Activated B cell treated with CpG ODN at 0.5 μM for 24 hours (primary cell): ENCODE measurements at regions of chr12 and their contacts with region 1.

Region 1: GRCh38 chr12:130044991-130045621 is 117.2 kb upstream of the FZD10 start:
- DNase-seq: no peak
- ATAC-seq: no peak
- H3K4me3 Mint-ChIP-seq: no peak overlapping the region
- H3K27ac Mint-ChIP-seq: no peak overlapping the region
- H3K4me1 Mint-ChIP-seq: no peaks in the 10 kb centered on the region
- H3K27me3 Mint-ChIP-seq: peaks cover 30% of the 10 kb centered on the region
- CTCF ChIP-seq: no peak

Region 2: GRCh38 chr12:129961091-129961490 is 84.0 kb before region 1 on chr12:
- CTCF ChIA-PET with region 1: no interaction called
- POLR2A ChIA-PET with region 1: no interaction called
- intact Hi-C with region 1: no loop called
- DNase-seq: no peak
- ATAC-seq: no peak
- H3K4me3 Mint-ChIP-seq: no peak overlapping the region
- H3K27ac Mint-ChIP-seq: no peak overlapping the region
- H3K4me1 Mint-ChIP-seq: no peaks in the 10 kb centered on the region
- H3K27me3 Mint-ChIP-seq: no peaks in the 10 kb centered on the region
- CTCF ChIP-seq: no peak

Region 3: DNA sequence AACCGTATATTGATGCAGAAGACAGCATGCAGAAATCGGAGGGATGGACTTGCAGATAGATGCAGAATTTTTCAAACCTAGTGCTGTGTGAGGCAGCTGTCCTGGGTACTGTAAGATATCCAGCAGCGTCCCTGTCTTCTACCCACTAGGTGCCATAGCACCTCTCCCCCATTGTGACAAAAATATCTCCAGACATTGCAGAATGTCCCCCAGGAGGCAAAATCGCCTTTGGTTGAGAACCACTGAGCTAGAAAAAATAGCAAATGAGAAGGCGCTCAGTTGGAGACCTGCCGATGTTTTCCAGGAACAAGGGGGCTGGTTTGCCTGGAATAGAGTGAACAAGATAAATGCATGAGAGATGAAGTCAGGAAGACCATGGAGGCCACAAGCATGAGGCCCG is 73.4 kb before region 1 on chr12:
- CTCF ChIA-PET with region 1: no interaction called
- POLR2A ChIA-PET with region 1: no interaction called
- intact Hi-C with region 1: no loop called
- DNase-seq: no peak
- ATAC-seq: no peak
- H3K4me3 Mint-ChIP-seq: no peak overlapping the region
- H3K27ac Mint-ChIP-seq: no peak overlapping the region
- H3K4me1 Mint-ChIP-seq: no peaks in the 10 kb centered on the region
- H3K27me3 Mint-ChIP-seq: no peaks in the 10 kb centered on the region
- CTCF ChIP-seq: no peak

Region 4: GRCh38 chr12:130281153-130281799 is 236.2 kb after region 1 on chr12:
- CTCF ChIA-PET with region 1: no interaction called
- POLR2A ChIA-PET with region 1: no interaction called
- intact Hi-C with region 1: no loop called
- DNase-seq: peak; percentile 27
- ATAC-seq: no peak
- H3K4me3 Mint-ChIP-seq: no peak overlapping the region
- H3K27ac Mint-ChIP-seq: no peak overlapping the region
- H3K4me1 Mint-ChIP-seq: no peaks in the 10 kb centered on the region
- H3K27me3 Mint-ChIP-seq: no peaks in the 10 kb centered on the region
- CTCF ChIP-seq: no peak

Region 5: GRCh38 chr12:130331146-130331545 is 286.0 kb after region 1 on chr12:
- CTCF ChIA-PET with region 1: no interaction called
- POLR2A ChIA-PET with region 1: no interaction called
- intact Hi-C with region 1: no loop called
- DNase-seq: no peak
- ATAC-seq: no peak
- H3K4me3 Mint-ChIP-seq: no peak overlapping the region
- H3K27ac Mint-ChIP-seq: no peak overlapping the region
- H3K4me1 Mint-ChIP-seq: no peaks in the 10 kb centered on the region
- H3K27me3 Mint-ChIP-seq: peaks cover 3% of the 10 kb centered on the region
- CTCF ChIP-seq: no peak

Region 6: GRCh38 chr12:130747867-130748740 is 703.0 kb after region 1 on chr12:
- CTCF ChIA-PET with region 1: no interaction called
- POLR2A ChIA-PET with region 1: no interaction called
- intact Hi-C with region 1: loop called (anchors 5 kb)
- DNase-seq: peak; percentile 40
- ATAC-seq: peak; percentile 47
- H3K4me3 Mint-ChIP-seq: no peak overlapping the region
- H3K27ac Mint-ChIP-seq: no peak overlapping the region
- H3K4me1 Mint-ChIP-seq: peaks cover 11% of the 10 kb centered on the region
- H3K27me3 Mint-ChIP-seq: peaks cover 7% of the 10 kb centered on the region
- CTCF ChIP-seq: no peak